H1 (cell line): ENCODE measurements at regions of chr11 and their contacts with region 1.

Region 1: DNA sequence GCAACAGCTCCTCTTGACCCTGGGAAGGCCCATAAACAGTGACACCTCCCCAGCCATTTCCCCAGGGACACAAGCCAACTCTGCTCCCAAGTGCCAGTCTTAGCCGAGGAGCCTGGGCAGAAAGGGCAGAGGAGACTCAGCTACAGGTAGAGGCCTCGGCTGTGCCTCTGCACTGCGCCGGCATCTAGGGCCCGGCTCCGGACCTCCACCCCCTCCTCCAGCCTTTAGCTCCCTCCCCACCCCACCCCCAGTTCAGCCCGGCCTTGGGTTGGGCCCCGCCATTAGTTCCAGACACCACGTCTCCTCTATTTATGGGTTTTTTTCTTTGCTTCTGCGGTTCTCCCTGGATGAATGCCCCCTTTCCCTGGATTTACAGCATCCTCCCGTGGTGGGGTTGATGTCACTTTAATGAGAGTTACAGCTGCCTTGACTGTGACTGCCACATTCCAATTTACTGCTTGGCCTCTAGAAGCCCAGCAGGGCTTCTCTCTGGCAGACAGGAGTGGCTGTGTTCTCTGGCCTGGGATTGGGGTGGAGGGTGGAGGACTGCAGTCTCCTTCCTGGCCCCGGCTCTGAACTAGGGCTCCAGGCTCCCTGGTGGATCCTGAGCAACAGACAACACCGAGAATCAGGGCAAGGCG is 13.5 kb upstream of the OAF start:
- DNase-seq: no peak
- H3K4me3 ChIP-seq: peak overlapping the region in 1 of 4 experiments; percentile 29; a peak in 1 of 8 replicates
- H3K27ac ChIP-seq: no peak overlapping the region
- H3K4me1 ChIP-seq: peaks cover 4 to 28% (median 20%) of the 10 kb centered on the region in 4 experiments
- H3K27me3 ChIP-seq: peaks cover 3 to 41% (median 38%) of the 10 kb centered on the region in 4 experiments
- CTCF ChIP-seq: 0 out of 4 replicates have a peak, but pooled peaks of 1 of the 3 experiments have one; percentile 0
- EP300 ChIP-seq: no peak
- POLR2A ChIP-seq: no peak
- RAD21 ChIP-seq: no peak

Region 2: GRCh38 chr11:120182790-120183491 is 14.4 kb before region 1 on chr11:
- CTCF ChIA-PET with region 1: interaction called, 88 read pairs
- POLR2A ChIA-PET with region 1: no interaction called
- DNase-seq: peak in 1 of 2 experiments; percentile 76
- H3K4me3 ChIP-seq: no peak overlapping the region
- H3K27ac ChIP-seq: no peak overlapping the region
- H3K4me1 ChIP-seq: peaks cover 1 to 14% (median 4%) of the 10 kb centered on the region in 4 experiments; a peak in 4 of 7 replicates
- H3K27me3 ChIP-seq: peaks cover 0 to 28% (median 21%) of the 10 kb centered on the region in 4 experiments; a peak in 4 of 7 replicates
- CTCF ChIP-seq: peak; percentile 58 to 83 (median 64)
- EP300 ChIP-seq: no peak
- POLR2A ChIP-seq: no peak
- RAD21 ChIP-seq: peak; percentile 49 to 64

Region 3: DNA sequence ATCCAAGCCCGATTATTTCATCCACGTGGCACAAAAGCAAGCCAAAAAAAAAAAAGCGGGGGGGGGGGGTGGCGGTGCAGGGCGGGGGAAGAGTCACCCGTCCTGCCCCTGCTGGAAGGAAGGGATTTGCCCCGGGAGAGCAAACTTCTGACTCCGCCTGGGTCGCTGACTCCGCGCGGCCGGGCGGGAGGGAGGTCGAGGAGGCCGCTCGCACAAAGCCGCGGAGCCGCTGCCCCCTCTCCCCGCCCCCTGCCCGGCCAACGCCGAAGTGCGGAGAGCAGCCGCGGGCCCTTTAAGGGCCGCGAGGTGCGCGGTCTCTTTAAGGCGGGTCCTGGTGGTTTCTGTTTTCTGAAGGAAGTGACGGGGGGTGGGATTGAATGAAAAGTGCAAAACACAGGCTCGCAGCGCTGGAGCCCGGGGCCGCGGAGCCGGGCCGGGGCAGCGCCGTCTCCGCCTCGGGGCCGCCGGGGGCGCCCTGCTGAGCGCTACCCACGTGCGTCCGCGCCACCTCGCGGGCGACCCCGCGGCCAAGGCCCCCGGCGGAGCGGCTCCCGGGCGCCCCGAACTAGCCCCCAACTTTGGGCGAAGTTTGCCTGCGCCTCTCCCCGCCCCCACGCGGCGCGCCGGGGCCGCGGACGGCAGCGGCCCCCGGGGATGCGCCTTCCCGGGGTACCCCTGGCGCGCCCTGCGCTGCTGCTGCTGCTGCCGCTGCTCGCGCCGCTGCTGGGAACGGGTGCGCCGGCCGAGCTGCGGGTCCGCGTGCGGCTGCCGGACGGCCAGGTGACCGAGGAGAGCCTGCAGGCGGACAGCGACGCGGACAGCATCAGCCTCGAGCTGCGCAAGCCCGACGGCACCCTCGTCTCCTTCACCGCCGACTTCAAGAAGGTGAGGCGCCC is 13.5 kb after region 1 on chr11 and contains the start of gene OAF:
- CTCF ChIA-PET with region 1: interaction called, 23 read pairs
- POLR2A ChIA-PET with region 1: interaction called, 3 read pairs
- DNase-seq: peak; percentile 58 to 85
- H3K4me3 ChIP-seq: peak within 1 kb of the TSS; percentile 43 to 68 (median 58)
- H3K27ac ChIP-seq: no peak within 1 kb of the TSS
- H3K4me1 ChIP-seq: peaks cover 4 to 12% (median 8%) of the 10 kb centered on the region in 4 experiments
- H3K27me3 ChIP-seq: peaks cover 67 to 94% (median 87%) of the 10 kb centered on the region in 4 experiments
- CTCF ChIP-seq: no peak
- EP300 ChIP-seq: no peak
- POLR2A ChIP-seq: no peak
- RAD21 ChIP-seq: no peak
- total RNA-seq, gene OAF: 1.1 and 1.3 TPM in 2 replicates

Region 4: GRCh38 chr11:120261931-120262330 is 64.6 kb after region 1 on chr11:
- CTCF ChIA-PET with region 1: no interaction called
- POLR2A ChIA-PET with region 1: no interaction called
- DNase-seq: no peak
- H3K4me3 ChIP-seq: no peak overlapping the region
- H3K27ac ChIP-seq: no peak overlapping the region
- H3K4me1 ChIP-seq: peaks cover 2 to 9% (median 7%) of the 10 kb centered on the region in 4 experiments; a peak in 5 of 7 replicates
- H3K27me3 ChIP-seq: peaks cover 0 to 2% (median 0%) of the 10 kb centered on the region in 4 experiments; a peak in 2 of 7 replicates
- CTCF ChIP-seq: no peak
- EP300 ChIP-seq: no peak
- POLR2A ChIP-seq: no peak
- RAD21 ChIP-seq: no peak